ENCODE measurements at regions of chr2 and their contacts with region 1.

Region 1: DNA sequence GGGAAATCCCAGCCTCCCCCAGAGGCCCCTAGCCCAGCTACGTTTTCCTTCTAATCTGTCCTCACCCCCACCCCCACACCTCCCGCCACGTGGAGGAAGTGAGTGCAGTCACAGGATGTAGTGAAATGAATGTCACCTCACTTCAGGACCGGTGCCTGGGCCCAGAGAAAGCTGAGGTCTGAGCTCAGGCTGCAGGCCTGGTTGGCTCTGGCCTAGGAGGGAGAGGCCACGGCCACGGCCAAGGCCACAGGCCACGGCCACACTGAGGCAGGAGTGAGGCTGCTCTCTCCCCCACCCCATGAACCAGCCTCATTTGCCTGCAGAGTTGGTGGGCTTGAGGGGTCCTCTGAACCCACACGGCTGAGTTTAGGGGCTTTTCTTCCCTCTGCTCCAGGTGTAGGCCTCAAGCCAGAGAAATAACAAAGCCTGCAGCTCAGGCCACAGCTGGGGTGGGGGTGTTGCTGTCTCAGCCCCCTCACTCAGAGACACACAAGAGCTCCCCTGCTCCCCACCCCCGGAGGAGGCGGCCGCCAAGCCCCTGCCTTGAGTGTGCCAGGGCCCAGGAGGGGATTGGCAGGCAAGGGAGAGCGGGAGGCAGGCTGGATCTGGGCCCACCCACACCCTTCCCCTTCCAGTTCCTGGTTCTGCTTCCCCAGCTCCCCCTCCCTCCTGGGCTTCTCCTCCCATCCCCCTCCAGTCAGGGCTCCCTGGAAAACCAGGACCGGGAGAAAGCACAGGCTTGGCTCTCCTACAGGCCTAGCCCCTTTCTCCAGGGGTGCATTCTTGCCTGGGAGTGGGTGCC is 27.0 kb downstream of the DNMT3A start:
- DNase-seq: peak; percentile 53 to 80 (median 60)
- H3K4me3 ChIP-seq: peak overlapping the region; percentile 14 to 57
- H3K4me3 Mint-ChIP-seq: peak overlapping the region; percentile 82 to 90 (median 87)
- H3K27ac ChIP-seq: peak overlapping the region; percentile 61
- H3K27ac Mint-ChIP-seq: peak overlapping the region; percentile 91 to 94 (median 92)
- H3K4me1 ChIP-seq: peaks cover 67% of the 10 kb centered on the region
- H3K4me1 Mint-ChIP-seq: peaks cover 27 to 76% (median 46%) of the 10 kb centered on the region in 4 donors
- H3K27me3 ChIP-seq: no peaks in the 10 kb centered on the region
- H3K27me3 Mint-ChIP-seq: no peaks in the 10 kb centered on the region

Region 2: DNA sequence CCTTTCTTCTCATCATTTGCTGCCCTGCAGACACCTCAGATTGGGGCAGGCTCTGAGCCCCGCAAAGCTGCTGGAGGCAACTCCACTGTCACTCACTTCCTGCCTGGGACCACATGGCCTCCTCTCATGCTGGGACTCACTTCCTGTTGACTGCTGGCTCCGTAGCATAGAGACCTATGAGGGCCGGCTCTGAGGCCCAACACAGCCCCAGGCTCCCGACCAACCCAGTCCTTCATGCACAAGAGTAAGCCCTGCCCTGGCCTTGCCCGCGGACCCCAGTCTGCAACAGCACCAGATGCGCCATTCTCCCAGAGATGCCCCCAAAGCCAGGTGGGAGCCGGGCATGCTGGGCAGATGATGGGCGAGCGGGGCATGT is 28.7 kb before region 1 on chr2:
- CTCF ChIA-PET with region 1: interaction called, 14 read pairs
- POLR2A ChIA-PET with region 1: interaction called, 36 read pairs
- intact Hi-C with region 1: no loop called
- DNase-seq: peak; percentile 68 to 83 (median 75)
- H3K4me3 ChIP-seq: peak overlapping the region in 1 of 2 donors; percentile 21
- H3K4me3 Mint-ChIP-seq: peak overlapping the region; percentile 17 to 91 (median 76)
- H3K27ac ChIP-seq: peak overlapping the region; percentile 63
- H3K27ac Mint-ChIP-seq: peak overlapping the region; percentile 85 to 99 (median 97)
- H3K4me1 ChIP-seq: peaks cover 41% of the 10 kb centered on the region
- H3K4me1 Mint-ChIP-seq: peaks cover 18 to 50% (median 30%) of the 10 kb centered on the region in 4 donors
- H3K27me3 ChIP-seq: no peaks in the 10 kb centered on the region
- H3K27me3 Mint-ChIP-seq: no peaks in the 10 kb centered on the region

Region 3: DNA sequence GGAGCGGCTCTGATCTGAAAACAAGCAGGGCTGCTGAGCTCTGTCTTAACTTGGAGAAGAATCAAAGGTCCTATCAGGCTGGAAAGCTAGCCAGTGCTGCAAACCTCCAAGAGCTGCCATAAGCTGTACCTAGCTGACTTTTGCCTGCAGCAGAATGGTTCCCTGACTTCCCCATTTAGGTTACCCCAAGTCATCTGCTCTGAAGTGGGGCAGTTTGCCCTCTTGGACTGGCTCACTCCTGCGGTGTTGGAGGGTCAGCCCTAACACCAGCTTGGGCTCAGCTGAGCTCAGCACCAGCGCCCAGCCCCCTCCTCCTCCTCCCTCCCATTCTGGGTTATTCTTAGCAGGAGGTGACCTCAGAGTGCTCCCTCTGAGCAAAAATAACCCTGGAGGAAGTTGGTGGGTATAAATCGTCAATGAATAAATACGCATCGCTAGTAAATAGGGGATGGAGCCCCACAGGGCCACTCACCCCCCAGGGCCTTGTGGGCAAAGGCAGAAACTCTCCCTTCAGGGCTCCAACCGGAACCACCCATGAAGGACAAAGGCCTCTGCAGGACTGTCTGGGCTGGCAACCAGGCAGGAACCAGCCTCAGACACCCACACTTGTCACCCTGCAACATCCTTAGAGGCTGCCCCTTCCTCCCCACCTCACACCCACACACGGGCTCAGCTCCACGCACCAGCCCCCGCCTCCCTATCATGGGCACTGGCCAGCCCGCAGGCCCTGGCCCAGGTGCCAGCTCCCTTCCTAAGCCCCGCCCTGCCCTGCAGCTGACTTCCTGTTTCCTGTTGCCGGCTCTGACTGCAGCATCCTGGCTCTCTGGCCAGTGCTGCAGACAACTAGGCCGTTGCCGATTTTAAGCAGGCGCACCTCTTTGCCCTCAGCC is 19.9 kb before region 1 on chr2:
- CTCF ChIA-PET with region 1: interaction called, 23 read pairs
- POLR2A ChIA-PET with region 1: interaction called, 37 read pairs
- intact Hi-C with region 1: no loop called
- DNase-seq: peak; percentile 73 to 90 (median 76)
- H3K4me3 ChIP-seq: peak overlapping the region; percentile 32 to 39
- H3K4me3 Mint-ChIP-seq: peak overlapping the region; percentile 72 to 90 (median 82)
- H3K27ac ChIP-seq: peak overlapping the region; percentile 69
- H3K27ac Mint-ChIP-seq: peak overlapping the region; percentile 86 to 97 (median 93)
- H3K4me1 ChIP-seq: peaks cover 52% of the 10 kb centered on the region
- H3K4me1 Mint-ChIP-seq: peaks cover 28 to 43% (median 37%) of the 10 kb centered on the region in 4 donors
- H3K27me3 ChIP-seq: no peaks in the 10 kb centered on the region
- H3K27me3 Mint-ChIP-seq: no peaks in the 10 kb centered on the region

Region 4: DNA sequence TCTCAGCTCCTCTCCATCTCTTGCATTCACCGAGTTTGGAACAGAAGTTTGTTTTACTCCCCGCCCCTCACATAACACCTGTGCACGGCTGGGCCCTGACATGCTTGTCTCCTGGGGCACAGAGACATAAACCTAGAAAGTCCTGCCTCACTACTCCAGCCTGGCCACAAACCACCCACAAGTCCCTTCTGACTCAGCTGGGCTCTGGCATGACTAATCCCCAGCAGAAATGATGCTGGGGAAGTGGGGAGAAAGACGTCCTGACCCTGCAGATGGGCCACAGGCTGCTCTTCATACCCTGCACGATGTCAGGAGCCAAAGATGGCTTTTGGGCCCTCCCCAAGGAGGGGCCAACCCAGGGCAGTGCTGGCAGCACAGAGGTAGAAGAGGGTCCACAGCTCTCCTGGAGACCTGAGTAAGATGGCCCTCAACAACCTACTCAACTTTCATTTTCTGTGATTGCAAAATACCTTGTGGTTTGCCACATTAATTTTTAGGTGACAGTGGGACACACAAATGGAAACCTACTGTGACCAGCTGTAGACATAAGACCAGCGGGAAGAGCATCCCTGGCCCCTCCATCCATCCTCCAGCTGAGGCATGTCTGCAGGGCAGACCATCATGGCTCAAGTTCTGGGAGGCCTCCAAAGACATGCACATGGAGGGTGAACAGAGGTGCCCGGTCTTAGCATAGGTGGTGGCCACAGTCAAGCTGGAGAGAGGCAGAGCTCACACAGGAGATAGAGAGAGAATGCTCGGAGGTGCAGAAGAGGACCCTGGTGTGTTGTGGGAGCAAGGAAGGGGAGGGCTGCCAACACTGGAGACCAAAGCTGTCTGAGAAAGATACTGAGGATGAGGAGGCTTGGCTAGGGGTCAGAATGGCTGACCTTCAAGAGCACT is 13.0 kb before region 1 on chr2:
- CTCF ChIA-PET with region 1: interaction called, 9 read pairs
- POLR2A ChIA-PET with region 1: interaction called, 35 read pairs
- intact Hi-C with region 1: no loop called
- DNase-seq: peak in 3 of 5 donors; percentile 31 to 83 (median 38)
- H3K4me3 ChIP-seq: no peak overlapping the region
- H3K4me3 Mint-ChIP-seq: peak overlapping the region in 7 of 8 donors; percentile 15 to 74 (median 32)
- H3K27ac ChIP-seq: peak overlapping the region; percentile 41
- H3K27ac Mint-ChIP-seq: peak overlapping the region; percentile 76 to 97 (median 84)
- H3K4me1 ChIP-seq: peaks cover 51% of the 10 kb centered on the region
- H3K4me1 Mint-ChIP-seq: peaks cover 25 to 54% (median 42%) of the 10 kb centered on the region in 4 donors
- H3K27me3 ChIP-seq: no peaks in the 10 kb centered on the region
- H3K27me3 Mint-ChIP-seq: no peaks in the 10 kb centered on the region

Region 5: DNA sequence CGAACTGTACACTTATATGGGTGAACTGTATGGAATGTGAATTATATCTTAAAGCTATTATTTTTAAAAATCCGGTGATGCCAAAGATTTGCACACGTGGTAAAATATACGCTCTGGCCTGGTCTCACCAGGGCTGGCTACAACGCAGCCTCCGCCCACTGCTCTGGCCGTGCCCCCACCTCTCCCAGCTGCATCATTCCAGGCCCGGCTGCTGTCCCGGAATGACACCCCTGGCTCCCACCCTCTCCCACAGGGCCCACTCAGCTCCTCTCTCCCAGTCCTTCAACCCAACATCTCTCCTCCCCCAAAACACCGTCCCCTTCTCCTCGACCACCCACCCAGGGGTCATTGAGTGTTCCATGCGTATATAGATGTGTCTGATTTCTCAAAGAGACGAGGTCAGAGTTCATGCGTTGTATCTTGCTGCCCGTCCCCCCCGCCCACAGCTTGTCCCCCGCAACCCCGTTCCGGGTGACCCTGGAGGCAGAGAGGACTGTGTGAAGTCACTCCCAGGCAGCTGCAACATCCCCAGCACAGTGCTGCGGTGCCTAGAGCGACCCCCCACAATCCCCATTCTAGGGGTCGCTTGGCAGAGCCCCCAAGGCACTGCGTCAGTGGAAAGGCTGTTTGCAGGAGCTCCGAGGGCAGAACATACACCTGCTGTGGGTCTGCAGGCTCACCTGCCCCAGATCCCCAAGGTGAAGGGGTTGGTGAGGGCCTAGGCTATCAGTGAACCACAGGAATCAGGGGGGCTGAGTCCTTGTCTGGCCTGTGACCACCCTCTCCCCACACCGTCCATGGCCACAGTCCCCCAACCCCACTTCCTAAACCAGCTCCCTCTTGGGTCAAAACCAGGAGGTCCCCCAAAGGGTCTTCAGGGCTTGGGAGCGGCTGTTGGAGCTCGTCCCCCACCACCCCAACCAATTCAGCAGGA is 13.7 kb after region 1 on chr2:
- CTCF ChIA-PET with region 1: interaction called, 22 read pairs
- POLR2A ChIA-PET with region 1: interaction called, 26 read pairs
- intact Hi-C with region 1: no loop called
- DNase-seq: no peak
- H3K4me3 ChIP-seq: no peak overlapping the region
- H3K4me3 Mint-ChIP-seq: peak overlapping the region in 1 of 8 donors; percentile 10
- H3K27ac ChIP-seq: no peak overlapping the region
- H3K27ac Mint-ChIP-seq: peak overlapping the region in 4 of 7 donors; percentile 19 to 81 (median 31)
- H3K4me1 ChIP-seq: peaks cover 14% of the 10 kb centered on the region
- H3K4me1 Mint-ChIP-seq: peaks cover 32 to 55% (median 42%) of the 10 kb centered on the region in 4 donors
- H3K27me3 ChIP-seq: no peaks in the 10 kb centered on the region
- H3K27me3 Mint-ChIP-seq: no peaks in the 10 kb centered on the region

Region 6: GRCh38 chr2:25337276-25337675 is 22.6 kb after region 1 on chr2:
- CTCF ChIA-PET with region 1: interaction called, 9 read pairs
- POLR2A ChIA-PET with region 1: interaction called, 24 read pairs
- intact Hi-C with region 1: loop called (anchors 1 kb)
- DNase-seq: no peak
- H3K4me3 ChIP-seq: no peak overlapping the region
- H3K4me3 Mint-ChIP-seq: peak overlapping the region; percentile 18 to 65 (median 56)
- H3K27ac ChIP-seq: peak overlapping the region; percentile 26
- H3K27ac Mint-ChIP-seq: peak overlapping the region; percentile 58 to 81 (median 70)
- H3K4me1 ChIP-seq: peaks cover 70% of the 10 kb centered on the region
- H3K4me1 Mint-ChIP-seq: peaks cover 45 to 75% (median 61%) of the 10 kb centered on the region in 4 donors
- H3K27me3 ChIP-seq: no peaks in the 10 kb centered on the region
- H3K27me3 Mint-ChIP-seq: no peaks in the 10 kb centered on the region

Region 7: DNA sequence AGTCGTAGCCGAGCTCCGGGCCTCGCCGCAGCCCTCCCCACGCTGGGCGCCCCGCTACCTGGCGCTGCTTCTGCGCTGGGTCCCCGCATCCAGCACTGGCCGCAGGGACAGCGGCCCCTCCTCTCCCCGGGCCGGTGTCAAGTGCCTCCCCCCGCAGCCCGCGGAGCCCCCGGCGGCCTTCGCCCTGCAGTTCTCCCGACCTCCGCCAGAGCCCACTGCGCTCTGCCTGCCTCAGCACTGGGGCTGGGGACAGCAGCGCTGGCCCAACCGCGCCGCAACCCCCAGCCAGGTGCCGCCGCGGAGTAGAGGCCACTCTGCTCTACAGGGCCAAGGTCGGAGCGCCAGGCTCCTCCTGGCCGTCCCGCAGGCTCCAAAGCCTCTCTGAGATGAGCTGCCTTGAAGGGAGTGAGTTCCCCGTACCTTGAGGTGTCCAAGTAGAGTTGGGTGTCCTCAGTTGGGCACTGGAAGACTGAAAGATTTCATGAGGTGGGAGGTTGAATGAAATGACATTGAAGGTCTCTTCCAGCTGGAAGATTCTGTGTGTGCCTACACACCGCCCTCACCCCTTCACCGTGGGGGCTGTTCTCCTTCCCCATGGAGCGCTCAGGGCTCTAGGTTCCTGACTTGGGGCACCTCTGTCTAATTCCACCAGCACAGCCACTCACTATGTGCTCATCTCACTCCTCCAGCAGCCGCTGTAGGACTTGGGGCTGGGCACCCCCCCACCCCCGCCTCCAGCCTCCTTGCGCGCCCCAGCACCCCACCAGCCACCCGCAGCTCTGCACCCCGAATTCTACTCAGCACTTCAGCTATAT is 27.9 kb after region 1 on chr2:
- CTCF ChIA-PET with region 1: interaction called, 9 read pairs
- POLR2A ChIA-PET with region 1: interaction called, 24 read pairs
- intact Hi-C with region 1: loop called (anchors 1 kb)
- DNase-seq: peak; percentile 78 to 83 (median 81)
- H3K4me3 ChIP-seq: peak overlapping the region in 1 of 2 donors; percentile 52
- H3K4me3 Mint-ChIP-seq: peak overlapping the region; percentile 66 to 89 (median 82)
- H3K27ac ChIP-seq: no peak overlapping the region
- H3K27ac Mint-ChIP-seq: peak overlapping the region in 3 of 7 donors; percentile 74 to 84 (median 74)
- H3K4me1 ChIP-seq: peaks cover 34% of the 10 kb centered on the region
- H3K4me1 Mint-ChIP-seq: peaks cover 10 to 35% (median 23%) of the 10 kb centered on the region in 4 donors
- H3K27me3 ChIP-seq: no peaks in the 10 kb centered on the region
- H3K27me3 Mint-ChIP-seq: no peaks in the 10 kb centered on the region

Region 8: GRCh38 chr2:25453199-25453905 is 138.6 kb after region 1 on chr2:
- CTCF ChIA-PET with region 1: no interaction called
- POLR2A ChIA-PET with region 1: no interaction called
- intact Hi-C with region 1: no loop called
- DNase-seq: no peak
- H3K4me3 ChIP-seq: no peak overlapping the region
- H3K4me3 Mint-ChIP-seq: no peak overlapping the region
- H3K27ac ChIP-seq: no peak overlapping the region
- H3K27ac Mint-ChIP-seq: no peak overlapping the region
- H3K4me1 ChIP-seq: no peaks in the 10 kb centered on the region
- H3K4me1 Mint-ChIP-seq: no peaks in the 10 kb centered on the region
- H3K27me3 ChIP-seq: no peaks in the 10 kb centered on the region
- H3K27me3 Mint-ChIP-seq: no peaks in the 10 kb centered on the region